GM12878 (cell line): ENCODE measurements at regions of chr20 and their contacts with region 1.

Region 1: DNA sequence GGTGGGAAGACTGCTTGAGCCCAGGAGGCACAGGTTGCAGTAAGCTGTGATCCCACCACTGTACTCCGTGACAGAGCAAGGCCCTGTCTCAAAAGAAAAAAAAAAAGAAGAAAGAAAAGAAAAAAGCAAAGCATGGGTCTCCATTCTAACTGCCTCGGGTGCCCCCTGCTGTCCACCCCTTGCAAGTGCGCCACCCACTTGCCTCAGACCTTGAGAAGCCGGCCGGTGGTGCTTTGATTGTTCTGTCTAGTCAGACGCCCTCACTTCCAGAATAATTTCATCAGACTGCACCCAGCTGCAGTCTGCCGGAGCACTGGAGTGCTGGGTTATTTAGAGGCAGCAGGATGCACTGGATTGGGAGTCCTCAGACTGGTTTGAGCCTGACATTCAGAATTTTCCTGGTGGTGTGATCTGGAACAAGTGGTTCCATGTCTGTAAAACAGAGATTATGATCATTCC is 17.6 kb upstream of the TM9SF4 start:
- DNase-seq: no peak
- ATAC-seq: peak; percentile 95
- H3K4me3 ChIP-seq: no peak overlapping the region
- H3K27ac ChIP-seq: no peak overlapping the region
- H3K4me1 ChIP-seq: peaks cover 8% of the 10 kb centered on the region
- H3K27me3 ChIP-seq: no peaks in the 10 kb centered on the region; a peak in 1 of 4 replicates
- CTCF ChIP-seq: peak; percentile 82 to 95 (median 94)
- EP300 ChIP-seq: no peak
- POLR2A ChIP-seq: no peak
- RAD21 ChIP-seq: peak; percentile 90

Region 2: GRCh38 chr20:31822421-31823330 is 269.2 kb before region 1 on chr20:
- CTCF ChIA-PET with region 1: interaction called, 11 read pairs
- POLR2A ChIA-PET with region 1: no interaction called
- RAD21 ChIA-PET with region 1: no interaction called
- SMC1A ChIA-PET with region 1: interaction called, 3 read pairs
- in situ Hi-C with region 1: no loop called
- intact Hi-C with region 1: loop called (anchors 2 kb)
- DNase-seq: no peak
- ATAC-seq: peak; percentile 97
- H3K4me3 ChIP-seq: no peak overlapping the region
- H3K27ac ChIP-seq: no peak overlapping the region
- H3K4me1 ChIP-seq: no peaks in the 10 kb centered on the region
- H3K27me3 ChIP-seq: no peaks in the 10 kb centered on the region
- CTCF ChIP-seq: peak; percentile 96 to 98 (median 98); a peak in 5 of 6 replicates
- EP300 ChIP-seq: no peak
- POLR2A ChIP-seq: no peak
- RAD21 ChIP-seq: peak; percentile 86

Region 3: GRCh38 chr20:31856516-31856915 is 235.4 kb before region 1 on chr20:
- CTCF ChIA-PET with region 1: interaction called, 11 read pairs
- POLR2A ChIA-PET with region 1: interaction called, 4 read pairs
- RAD21 ChIA-PET with region 1: interaction called, 10 read pairs
- SMC1A ChIA-PET with region 1: interaction called, 8 read pairs
- in situ Hi-C with region 1: loop called (anchors 10 kb)
- intact Hi-C with region 1: loop called (anchors 1 kb)
- DNase-seq: no peak
- ATAC-seq: no peak
- H3K4me3 ChIP-seq: no peak overlapping the region
- H3K27ac ChIP-seq: no peak overlapping the region
- H3K4me1 ChIP-seq: peaks cover 10% of the 10 kb centered on the region
- H3K27me3 ChIP-seq: peaks cover 0 to 6% of the 10 kb centered on the region in 2 experiments; a peak in 1 of 4 replicates
- CTCF ChIP-seq: no peak
- EP300 ChIP-seq: no peak
- POLR2A ChIP-seq: no peak
- RAD21 ChIP-seq: no peak

Region 4: GRCh38 chr20:31984981-31985471 is 106.9 kb before region 1 on chr20:
- CTCF ChIA-PET with region 1: no interaction called
- POLR2A ChIA-PET with region 1: no interaction called
- RAD21 ChIA-PET with region 1: no interaction called
- SMC1A ChIA-PET with region 1: no interaction called
- in situ Hi-C with region 1: no loop called
- intact Hi-C with region 1: no loop called
- DNase-seq: no peak
- ATAC-seq: no peak
- H3K4me3 ChIP-seq: no peak overlapping the region
- H3K27ac ChIP-seq: no peak overlapping the region
- H3K4me1 ChIP-seq: no peaks in the 10 kb centered on the region
- H3K27me3 ChIP-seq: no peaks in the 10 kb centered on the region; a peak in 1 of 4 replicates
- CTCF ChIP-seq: no peak
- EP300 ChIP-seq: no peak
- POLR2A ChIP-seq: no peak
- RAD21 ChIP-seq: no peak

Region 5: GRCh38 chr20:32040142-32041022 is 51.5 kb before region 1 on chr20:
- CTCF ChIA-PET with region 1: interaction called, 298 read pairs
- POLR2A ChIA-PET with region 1: interaction called, 17 read pairs
- RAD21 ChIA-PET with region 1: interaction called, 220 read pairs
- SMC1A ChIA-PET with region 1: interaction called, 344 read pairs
- in situ Hi-C with region 1: no loop called
- intact Hi-C with region 1: loop called (anchors 1 kb)
- DNase-seq: no peak
- ATAC-seq: peak; percentile 86
- H3K4me3 ChIP-seq: peak overlapping the region; percentile 53
- H3K27ac ChIP-seq: peak overlapping the region; percentile 48
- H3K4me1 ChIP-seq: peaks cover 14% of the 10 kb centered on the region
- H3K27me3 ChIP-seq: no peaks in the 10 kb centered on the region
- CTCF ChIP-seq: no peak
- EP300 ChIP-seq: no peak; a peak in 1 of 4 replicates
- POLR2A ChIP-seq: no peak
- RAD21 ChIP-seq: no peak

Region 6: GRCh38 chr20:32062776-32063170 is 29.1 kb before region 1 on chr20:
- CTCF ChIA-PET with region 1: interaction called, 26 read pairs
- POLR2A ChIA-PET with region 1: interaction called, 5 read pairs
- RAD21 ChIA-PET with region 1: interaction called, 23 read pairs
- SMC1A ChIA-PET with region 1: interaction called, 83 read pairs
- in situ Hi-C with region 1: no loop called
- intact Hi-C with region 1: no loop called
- DNase-seq: peak; percentile 55
- ATAC-seq: peak; percentile 79
- H3K4me3 ChIP-seq: 0 out of 2 replicates have a peak overlapping the region, but pooled peaks have one; percentile 12
- H3K27ac ChIP-seq: peak overlapping the region; percentile 51
- H3K4me1 ChIP-seq: peaks cover 36% of the 10 kb centered on the region
- H3K27me3 ChIP-seq: no peaks in the 10 kb centered on the region
- CTCF ChIP-seq: no peak
- EP300 ChIP-seq: 0 out of 4 replicates have a peak, but pooled peaks of 1 of the 2 experiments have one; percentile 32
- POLR2A ChIP-seq: no peak
- RAD21 ChIP-seq: no peak

Region 7: DNA sequence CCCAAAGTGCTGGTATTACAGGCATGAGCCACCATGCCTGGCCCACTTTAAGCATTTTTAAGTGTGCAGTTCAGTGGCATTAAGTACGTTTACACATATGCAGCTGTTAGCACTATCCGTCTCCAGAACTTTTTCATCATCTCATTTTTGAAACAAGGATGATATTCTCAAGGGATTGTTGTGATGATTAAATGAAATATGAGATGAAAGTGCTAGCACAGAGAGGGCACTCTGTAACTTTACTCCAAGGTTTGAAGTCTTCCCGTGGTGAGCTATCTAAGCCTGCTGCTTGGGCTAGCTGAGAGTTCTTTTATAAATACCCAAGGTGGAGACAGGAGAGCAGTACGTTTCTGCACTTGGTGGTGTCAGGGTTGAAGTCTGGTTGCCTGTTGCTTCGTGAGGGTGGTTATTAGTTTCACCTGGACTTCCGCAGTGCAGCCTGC is 24.2 kb after region 1 on chr20:
- CTCF ChIA-PET with region 1: interaction called, 3 read pairs
- POLR2A ChIA-PET with region 1: no interaction called
- RAD21 ChIA-PET with region 1: no interaction called
- SMC1A ChIA-PET with region 1: interaction called, 10 read pairs
- in situ Hi-C with region 1: no loop called
- intact Hi-C with region 1: no loop called
- DNase-seq: no peak
- ATAC-seq: no peak
- H3K4me3 ChIP-seq: no peak overlapping the region
- H3K27ac ChIP-seq: no peak overlapping the region
- H3K4me1 ChIP-seq: peaks cover 14% of the 10 kb centered on the region
- H3K27me3 ChIP-seq: no peaks in the 10 kb centered on the region
- CTCF ChIP-seq: no peak
- EP300 ChIP-seq: no peak
- POLR2A ChIP-seq: no peak
- RAD21 ChIP-seq: no peak

Region 8: DNA sequence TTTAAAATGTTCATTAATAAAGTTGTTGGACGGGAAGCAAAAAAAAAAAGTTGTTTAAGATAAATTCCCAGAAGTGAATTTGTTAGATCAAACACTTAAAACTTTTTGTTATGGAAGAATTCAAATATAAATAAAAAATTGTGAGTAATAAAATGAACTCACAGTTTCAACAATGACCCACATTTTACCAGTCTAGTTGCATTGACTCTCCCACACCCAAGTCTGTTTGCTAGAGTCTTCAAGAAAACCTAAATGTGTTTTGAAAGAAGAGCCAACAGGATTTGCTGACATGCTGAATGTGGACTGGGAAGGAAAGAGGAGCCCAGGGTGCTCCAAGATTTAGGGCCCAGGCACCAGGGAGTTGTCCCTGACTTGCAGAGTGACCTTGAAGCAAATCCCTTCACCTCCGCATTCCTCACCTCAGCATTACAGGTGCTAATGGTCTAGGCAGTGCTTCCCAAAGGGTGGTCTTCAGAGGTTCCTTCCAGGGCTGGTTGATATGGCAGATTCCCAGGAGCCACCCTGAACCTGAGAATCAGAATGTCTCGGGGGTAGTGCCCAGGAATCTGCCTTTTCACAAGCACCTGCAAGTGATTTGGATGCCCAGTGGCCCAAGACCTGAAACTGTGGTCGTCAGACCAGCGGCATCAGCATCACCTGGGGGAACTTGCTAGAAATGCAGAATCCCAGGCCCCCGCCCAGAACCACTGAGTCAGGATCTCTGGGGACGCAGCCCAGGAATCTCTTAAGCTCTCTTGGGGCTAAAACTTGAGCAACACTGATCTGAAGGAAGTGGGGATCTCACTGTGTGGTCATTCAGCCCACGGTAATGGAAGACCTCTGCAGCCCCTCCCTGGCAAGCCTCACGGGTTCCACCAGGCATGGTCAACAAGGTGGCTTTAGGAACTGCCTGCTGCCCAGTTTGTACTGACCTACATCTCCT is 146.8 kb after region 1 on chr20:
- CTCF ChIA-PET with region 1: no interaction called
- POLR2A ChIA-PET with region 1: no interaction called
- RAD21 ChIA-PET with region 1: no interaction called
- SMC1A ChIA-PET with region 1: no interaction called
- in situ Hi-C with region 1: no loop called
- intact Hi-C with region 1: no loop called
- DNase-seq: no peak
- ATAC-seq: no peak
- H3K4me3 ChIP-seq: no peak overlapping the region
- H3K27ac ChIP-seq: no peak overlapping the region
- H3K4me1 ChIP-seq: peaks cover 13% of the 10 kb centered on the region
- H3K27me3 ChIP-seq: no peaks in the 10 kb centered on the region
- CTCF ChIP-seq: no peak
- EP300 ChIP-seq: no peak
- POLR2A ChIP-seq: no peak
- RAD21 ChIP-seq: no peak